ENCODE measurements at regions of chr3 and their contacts with region 1.

Region 1: GRCh38 chr3:57078344-57078634 is 17.8 kb downstream of the SPATA12 start:
- DNase-seq: peak in 4 of 5 donors; percentile 32 to 65 (median 46)
- H3K4me3 ChIP-seq: peak overlapping the region; percentile 64
- H3K27ac ChIP-seq: no peak overlapping the region
- H3K4me1 ChIP-seq: peaks cover 5% of the 10 kb centered on the region
- H3K27me3 ChIP-seq: no peaks in the 10 kb centered on the region
- CTCF ChIP-seq: no peak
- EP300 ChIP-seq: no peak
- POLR2A ChIP-seq: no peak

Region 2: DNA sequence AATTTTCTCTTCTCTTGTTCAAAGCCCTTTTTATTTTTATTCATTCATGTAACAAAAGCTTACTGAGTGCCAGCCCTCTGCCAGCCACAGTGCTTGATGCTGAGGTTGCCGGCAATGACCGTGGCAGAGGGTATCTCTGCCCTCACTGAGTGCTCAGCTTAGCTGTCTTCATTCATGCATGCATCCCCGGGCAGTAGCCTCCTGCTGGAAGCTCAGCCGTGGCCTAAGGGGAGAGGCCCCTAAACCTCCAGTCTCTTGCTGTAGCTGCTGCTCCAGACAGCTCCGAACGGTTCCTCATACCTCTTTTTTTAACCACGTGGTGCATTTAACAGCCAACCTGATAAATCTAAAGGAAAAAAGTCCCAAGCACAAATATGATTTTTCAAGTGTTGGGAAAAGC is 555.9 kb before region 1 on chr3:
- intact Hi-C with region 1: no loop called
- DNase-seq: no peak
- H3K4me3 ChIP-seq: no peak overlapping the region
- H3K27ac ChIP-seq: no peak overlapping the region
- H3K4me1 ChIP-seq: no peaks in the 10 kb centered on the region
- H3K27me3 ChIP-seq: no peaks in the 10 kb centered on the region
- CTCF ChIP-seq: no peak
- EP300 ChIP-seq: no peak
- POLR2A ChIP-seq: no peak

Region 3: DNA sequence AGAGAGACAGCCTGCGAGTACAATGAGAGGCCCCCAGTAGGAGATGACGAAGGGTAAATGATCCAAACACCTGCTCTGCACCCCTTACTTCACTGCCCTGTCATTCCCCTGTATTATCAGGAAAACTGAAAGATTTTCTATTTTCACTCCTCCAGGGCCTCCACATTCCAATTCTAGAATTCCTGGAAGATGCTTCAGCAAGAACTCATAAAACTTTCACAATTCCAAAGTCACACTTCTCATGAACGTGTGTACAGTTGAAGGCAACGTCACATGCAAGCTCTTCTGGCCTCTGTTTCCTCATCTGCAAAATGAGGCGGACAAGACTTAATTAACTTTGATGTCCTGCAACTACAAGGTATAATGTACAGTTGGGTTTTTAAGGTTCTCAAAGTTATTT is 80.6 kb before region 1 on chr3:
- intact Hi-C with region 1: loop called in 3 of 4 experiments (anchors 5 to 10 kb)
- DNase-seq: no peak
- H3K4me3 ChIP-seq: no peak overlapping the region
- H3K27ac ChIP-seq: peak overlapping the region in 1 of 2 donors; percentile 37
- H3K4me1 ChIP-seq: peaks cover 11% of the 10 kb centered on the region
- H3K27me3 ChIP-seq: no peaks in the 10 kb centered on the region
- CTCF ChIP-seq: no peak
- EP300 ChIP-seq: peak; percentile 9
- POLR2A ChIP-seq: no peak

Region 4: GRCh38 chr3:57007513-57008460 is 70.5 kb before region 1 on chr3:
- intact Hi-C with region 1: loop called in 1 of 4 experiments (anchors 10 kb)
- DNase-seq: peak; percentile 75 to 88 (median 77)
- H3K4me3 ChIP-seq: no peak overlapping the region
- H3K27ac ChIP-seq: peak overlapping the region; percentile 80 to 85
- H3K4me1 ChIP-seq: peaks cover 27% of the 10 kb centered on the region
- H3K27me3 ChIP-seq: no peaks in the 10 kb centered on the region
- CTCF ChIP-seq: no peak
- EP300 ChIP-seq: peak; percentile 76
- POLR2A ChIP-seq: no peak

Region 5: GRCh38 chr3:57130571-57131209 is 52.4 kb after region 1 on chr3:
- intact Hi-C with region 1: no loop called
- DNase-seq: peak in 3 of 5 donors; percentile 43 to 55 (median 46)
- H3K4me3 ChIP-seq: no peak overlapping the region
- H3K27ac ChIP-seq: peak overlapping the region in 1 of 2 donors; percentile 17
- H3K4me1 ChIP-seq: peaks cover 10% of the 10 kb centered on the region
- H3K27me3 ChIP-seq: no peaks in the 10 kb centered on the region
- CTCF ChIP-seq: no peak
- EP300 ChIP-seq: no peak
- POLR2A ChIP-seq: no peak